ENCODE measurements at regions of chr19 and their contacts with region 1.

Region 1: GRCh38 chr19:17075035-17075863 is at the starts of genes HAUS8 and MYO9B:
- DNase-seq: peak; percentile 99
- ATAC-seq: peak; percentile 94 to 98 (median 98)
- H3K4me3 ChIP-seq: peak within 1 kb of the TSS; percentile 61 to 88 (median 75)
- H3K27ac ChIP-seq: peak within 1 kb of the TSS; percentile 67 to 91 (median 81)
- H3K4me1 ChIP-seq: peaks cover 4 to 72% (median 45%) of the 10 kb centered on the region in 9 donors
- H3K27me3 ChIP-seq: no peaks in the 10 kb centered on the region
- CTCF ChIP-seq: no peak
- total RNA-seq, gene HAUS8: 2.0 to 9.1 (median 4.7) TPM
- total RNA-seq, gene MYO9B: 19.9 to 55.0 (median 27.5) TPM

Region 2: GRCh38 chr19:17041976-17042375 is 33.3 kb before region 1 on chr19:
- intact Hi-C with region 1: no loop called
- DNase-seq: peak; percentile 54 to 70
- ATAC-seq: peak; percentile 73 to 95 (median 91)
- H3K4me3 ChIP-seq: no peak overlapping the region
- H3K27ac ChIP-seq: peak overlapping the region in 8 of 10 donors; percentile 34 to 75 (median 58)
- H3K4me1 ChIP-seq: peaks cover 0 to 16% (median 0%) of the 10 kb centered on the region in 9 donors
- H3K27me3 ChIP-seq: peaks cover 0 to 21% (median 7%) of the 10 kb centered on the region in 7 donors
- CTCF ChIP-seq: no peak

Region 3: DNA sequence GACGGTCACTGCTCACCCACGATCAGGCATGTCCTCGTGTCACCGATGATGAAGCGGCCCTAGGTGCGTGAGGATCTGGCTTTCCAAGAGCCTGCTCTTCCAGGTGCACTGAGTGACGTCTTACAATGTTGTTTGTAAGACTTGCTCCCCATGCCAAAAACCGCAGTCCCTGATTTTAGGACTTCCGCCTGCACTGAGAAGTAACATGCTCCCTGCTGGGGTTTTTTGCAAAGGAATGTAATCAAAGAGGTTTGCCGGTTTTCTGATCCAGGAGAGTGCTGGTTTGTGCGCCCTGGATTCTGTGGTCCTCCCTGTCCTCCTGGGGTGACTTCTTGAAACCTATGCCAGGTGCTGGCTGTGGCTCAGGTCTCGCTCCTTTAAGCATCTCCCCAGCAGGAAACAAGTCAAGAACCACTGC is 39.2 kb after region 1 on chr19:
- intact Hi-C with region 1: no loop called
- DNase-seq: no peak
- ATAC-seq: no peak
- H3K4me3 ChIP-seq: no peak overlapping the region
- H3K27ac ChIP-seq: peak overlapping the region in 1 of 10 donors; percentile 83
- H3K4me1 ChIP-seq: peaks cover 0 to 74% (median 14%) of the 10 kb centered on the region in 9 donors
- H3K27me3 ChIP-seq: no peaks in the 10 kb centered on the region
- CTCF ChIP-seq: no peak

Region 4: DNA sequence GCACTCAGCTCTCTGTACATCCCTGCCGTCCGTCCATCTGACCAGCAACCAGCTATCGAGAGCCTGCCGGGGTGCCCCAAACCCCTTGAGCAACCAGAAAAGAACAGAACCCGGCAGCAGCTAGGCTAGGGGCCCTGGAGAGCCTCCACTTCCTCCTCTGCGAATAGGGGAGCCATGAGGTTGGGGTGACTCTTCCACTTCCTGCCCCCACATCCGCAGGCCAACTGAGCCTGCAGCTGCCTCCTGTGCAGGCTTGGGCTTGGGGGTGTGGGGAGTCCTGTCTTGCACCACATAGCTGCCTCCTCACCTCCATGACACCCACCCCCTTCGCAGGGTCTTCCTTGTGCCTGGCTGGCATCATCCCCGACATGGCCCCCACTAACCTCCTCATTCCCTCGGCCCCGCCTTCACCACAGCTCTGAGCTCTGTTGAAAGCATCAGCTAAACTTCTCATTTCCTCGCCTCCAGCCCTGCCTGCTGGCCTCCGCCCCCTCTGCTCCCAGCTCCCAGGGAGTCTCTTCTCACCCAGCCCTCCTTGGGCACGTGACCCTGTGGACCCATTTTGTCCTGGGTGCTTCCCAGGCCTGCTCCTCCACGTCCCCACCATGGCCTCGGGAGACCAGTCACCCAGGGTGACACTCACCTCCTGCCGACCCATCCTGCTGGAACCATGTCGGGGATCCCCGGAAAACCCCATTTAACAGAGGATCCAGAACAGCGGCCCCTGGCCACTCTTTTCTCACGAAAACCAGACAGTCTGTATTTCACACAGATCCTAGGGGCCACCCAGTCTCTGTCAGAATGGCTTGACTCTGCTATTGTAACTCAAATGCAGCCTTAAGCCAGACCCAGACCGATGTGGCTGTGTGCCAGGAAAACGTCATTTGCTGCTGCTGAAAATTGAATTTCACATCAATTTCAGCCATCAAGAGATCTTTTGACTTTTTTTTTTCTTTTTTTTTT is 50.7 kb after region 1 on chr19:
- intact Hi-C with region 1: loop called in 2 of 10 experiments (anchors 5 to 10 kb)
- DNase-seq: peak; percentile 61 to 64
- ATAC-seq: peak; percentile 61 to 88 (median 83)
- H3K4me3 ChIP-seq: peak overlapping the region in 5 of 10 donors; percentile 1 to 31 (median 8)
- H3K27ac ChIP-seq: peak overlapping the region; percentile 22 to 92 (median 66)
- H3K4me1 ChIP-seq: peaks cover 4 to 49% (median 15%) of the 10 kb centered on the region in 9 donors
- H3K27me3 ChIP-seq: no peaks in the 10 kb centered on the region
- CTCF ChIP-seq: no peak

Region 5: DNA sequence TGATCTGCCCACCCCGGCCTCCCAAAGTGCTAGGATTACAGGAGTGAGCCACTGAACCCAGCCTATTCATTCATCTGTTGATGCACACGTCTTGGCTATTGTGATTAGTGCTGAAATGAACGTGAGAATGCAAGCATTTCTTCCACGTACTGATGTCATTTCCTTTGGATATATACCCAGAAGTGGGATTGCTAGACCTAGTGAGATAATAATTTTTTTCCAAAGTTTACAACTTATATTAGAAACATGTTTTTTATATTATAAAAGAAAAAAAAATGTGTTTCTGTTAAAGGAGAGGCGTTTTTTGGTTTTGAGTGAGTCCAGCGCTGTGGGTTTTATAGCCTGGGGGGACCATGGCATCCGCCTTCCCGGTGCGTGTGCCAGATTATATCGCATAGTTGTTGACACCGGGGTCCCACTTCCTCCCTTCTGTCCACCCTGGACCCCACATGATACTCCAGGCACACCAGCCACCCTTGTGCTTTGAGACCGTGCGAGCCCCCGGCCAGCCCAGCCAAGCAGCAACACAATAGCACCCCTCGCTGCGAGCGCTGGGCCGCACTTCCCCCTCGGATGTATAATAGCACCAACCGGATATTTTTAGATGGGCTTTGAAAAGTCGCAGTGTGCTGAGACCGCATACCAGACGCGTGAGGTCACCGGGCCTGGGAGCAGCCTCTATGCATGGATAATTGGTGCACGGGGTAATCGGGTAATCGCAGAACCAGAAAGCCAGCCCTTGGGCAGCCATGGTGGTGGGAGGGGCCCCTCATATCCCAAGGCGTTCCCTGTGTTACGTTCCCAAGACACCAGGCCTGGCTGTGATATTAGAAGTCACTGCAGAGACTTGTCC is 60.0 kb after region 1 on chr19:
- intact Hi-C with region 1: loop called in 7 of 10 experiments (anchors 1 to 10 kb)
- DNase-seq: peak; percentile 92 to 97
- ATAC-seq: peak; percentile 92 to 96 (median 94)
- H3K4me3 ChIP-seq: peak overlapping the region in 8 of 10 donors; percentile 1 to 49 (median 28)
- H3K27ac ChIP-seq: peak overlapping the region; percentile 85 to 99 (median 90)
- H3K4me1 ChIP-seq: peaks cover 15 to 53% (median 43%) of the 10 kb centered on the region in 9 donors
- H3K27me3 ChIP-seq: no peaks in the 10 kb centered on the region
- CTCF ChIP-seq: peak; percentile 10 to 76 (median 42)

Region 6: DNA sequence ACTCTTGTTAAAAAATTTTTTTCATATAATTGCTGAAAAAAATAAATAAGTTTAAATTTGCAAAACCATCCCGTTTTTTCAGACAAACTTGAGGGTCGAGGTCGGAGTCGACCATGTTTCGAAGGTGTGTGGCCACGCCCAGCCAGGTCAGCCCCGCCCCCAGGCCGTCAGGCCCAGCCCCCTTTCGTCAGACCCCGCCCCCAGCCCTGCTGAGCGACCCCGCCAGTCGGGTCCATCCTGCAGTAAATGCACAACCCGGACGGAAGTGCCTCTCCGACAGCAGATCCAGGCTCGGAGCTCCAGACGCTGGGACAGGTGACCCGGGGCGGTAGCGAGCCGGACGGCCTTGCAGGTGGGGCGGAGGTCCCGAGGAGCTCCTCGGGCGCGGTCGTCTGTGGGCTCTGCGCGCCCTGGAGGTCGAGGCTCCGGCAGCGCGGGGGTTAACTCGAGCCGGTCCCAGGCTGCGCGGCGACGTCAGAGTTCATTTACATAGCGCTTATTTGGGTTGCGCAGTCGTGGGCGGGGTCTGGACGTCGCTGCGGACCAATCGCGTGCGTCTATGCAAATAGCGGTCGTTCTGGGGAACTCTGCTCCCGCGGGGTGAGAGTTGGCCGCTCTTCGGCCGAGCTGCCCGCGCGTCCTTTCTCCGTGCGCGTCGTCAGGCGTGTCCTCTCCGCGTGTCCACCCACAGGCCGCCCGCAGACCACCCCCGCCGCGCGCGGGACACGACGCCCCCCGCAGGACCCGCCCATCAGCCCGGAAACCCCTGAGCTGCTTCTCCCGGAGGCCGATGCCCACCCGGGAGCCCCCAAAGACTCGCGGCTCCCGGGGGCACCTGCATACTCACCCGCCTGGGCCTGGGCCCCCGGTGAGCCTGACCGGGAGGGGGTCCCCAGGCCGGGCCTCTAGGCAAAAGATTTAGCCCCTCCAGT is 151.0 kb after region 1 on chr19 and contains the start of gene OCEL1:
- intact Hi-C with region 1: loop called in 3 of 10 experiments (anchors 5 to 10 kb)
- DNase-seq: peak; percentile 98 to 99
- ATAC-seq: peak; percentile 97 to 98 (median 98)
- H3K4me3 ChIP-seq: peak within 1 kb of the TSS; percentile 22 to 88 (median 72)
- H3K27ac ChIP-seq: peak within 1 kb of the TSS; percentile 27 to 94 (median 88)
- H3K4me1 ChIP-seq: peaks cover 0 to 25% (median 15%) of the 10 kb centered on the region in 9 donors
- H3K27me3 ChIP-seq: no peaks in the 10 kb centered on the region
- CTCF ChIP-seq: no peak
- total RNA-seq, gene OCEL1: 7.2 to 38.6 (median 15.0) TPM

Region 7: DNA sequence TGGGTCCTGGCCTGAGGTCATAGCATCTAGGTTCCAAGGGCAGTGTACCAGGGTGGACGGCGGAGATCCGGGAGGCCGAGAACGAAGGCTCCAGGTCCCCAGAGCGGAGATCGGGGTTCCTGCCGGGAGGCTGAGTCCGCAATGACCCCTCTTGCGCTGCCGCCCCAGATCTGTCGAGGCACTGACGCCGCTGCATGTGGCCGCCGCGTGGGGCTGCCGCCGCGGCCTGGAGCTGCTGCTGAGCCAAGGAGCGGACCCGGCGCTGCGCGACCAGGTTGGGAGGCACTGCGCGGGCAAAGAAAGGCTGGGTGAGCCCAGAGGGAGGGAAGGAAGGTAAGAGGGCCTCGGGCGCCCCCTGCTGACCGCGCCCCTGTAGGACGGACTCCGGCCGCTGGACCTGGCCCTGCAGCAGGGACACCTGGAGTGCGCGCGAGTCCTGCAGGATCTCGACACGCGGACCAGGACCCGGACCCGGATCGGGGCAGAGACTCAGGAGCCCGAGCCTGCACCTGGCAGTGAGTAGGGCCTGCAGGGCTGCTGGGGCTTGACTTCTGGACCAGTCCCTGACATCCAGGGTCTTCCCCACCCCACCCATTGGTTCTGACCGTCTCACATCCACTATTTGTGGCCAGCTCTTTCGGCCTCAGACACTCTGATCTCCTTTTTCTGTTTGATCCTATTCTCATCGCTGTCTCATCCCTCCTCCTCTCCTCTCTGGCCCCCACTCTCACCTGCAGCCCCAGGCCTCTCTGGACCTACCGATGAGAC is 207.4 kb after region 1 on chr19:
- intact Hi-C with region 1: loop called in 1 of 10 experiments (anchors 5 kb)
- DNase-seq: peak; percentile 78 to 86
- ATAC-seq: peak; percentile 89 to 97 (median 94)
- H3K4me3 ChIP-seq: peak overlapping the region; percentile 6 to 56 (median 42)
- H3K27ac ChIP-seq: no peak overlapping the region
- H3K4me1 ChIP-seq: peaks cover 13 to 19% (median 16%) of the 10 kb centered on the region in 9 donors
- H3K27me3 ChIP-seq: peaks cover 11 to 21% (median 16%) of the 10 kb centered on the region in 7 donors
- CTCF ChIP-seq: peak; percentile 89 to 98 (median 95)

Region 8: DNA sequence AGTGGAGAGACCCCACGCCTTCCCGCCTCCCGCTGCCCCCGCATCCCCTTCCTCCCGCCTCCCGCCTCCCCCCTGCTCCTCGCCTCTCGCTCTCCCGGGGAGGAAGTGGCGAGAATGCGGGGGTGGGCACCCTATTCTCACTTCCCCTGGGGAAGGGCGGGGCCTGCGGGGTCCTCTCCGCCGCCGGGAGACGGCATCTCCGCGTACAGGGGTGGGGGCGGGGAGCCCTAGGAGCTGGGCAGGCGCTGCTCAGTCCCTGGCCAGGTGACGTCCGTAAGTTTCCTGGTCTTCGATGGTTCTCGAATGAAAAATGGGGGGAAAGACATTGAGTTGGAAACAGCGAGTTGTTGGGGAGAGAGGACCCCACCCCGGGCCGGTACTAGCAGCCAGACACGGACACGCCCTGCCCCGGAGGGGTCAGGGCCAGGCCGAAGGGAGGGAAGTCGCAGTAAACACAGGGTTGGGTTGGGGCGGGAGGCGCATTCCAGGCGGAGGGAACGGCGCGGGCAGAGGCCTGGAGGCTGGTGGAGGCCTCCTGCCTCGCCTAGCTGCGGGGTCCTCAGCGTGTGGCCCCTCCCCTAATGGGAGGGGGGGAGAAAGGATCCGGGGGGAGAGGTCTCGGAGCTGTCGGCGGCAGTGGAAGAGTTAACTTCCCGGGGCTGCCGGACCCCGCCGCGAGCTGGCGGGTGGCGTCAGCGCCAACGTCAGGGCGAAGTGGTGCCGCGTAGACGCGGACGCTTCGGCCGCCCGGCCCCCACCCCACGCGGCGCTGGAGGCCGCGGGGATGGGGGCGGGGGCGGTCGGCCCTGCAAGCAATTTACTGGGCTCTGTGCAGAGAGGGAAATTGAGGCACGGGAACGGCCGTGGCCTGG is 1216.6 kb after region 1 on chr19:
- intact Hi-C with region 1: loop called in 1 of 10 experiments (anchors 10 kb)
- DNase-seq: peak; percentile 87 to 93
- ATAC-seq: peak; percentile 80 to 86 (median 84)
- H3K4me3 ChIP-seq: peak overlapping the region; percentile 62 to 89 (median 76)
- H3K27ac ChIP-seq: peak overlapping the region; percentile 94 to 100 (median 99)
- H3K4me1 ChIP-seq: peaks cover 3 to 48% (median 26%) of the 10 kb centered on the region in 9 donors
- H3K27me3 ChIP-seq: no peaks in the 10 kb centered on the region
- CTCF ChIP-seq: no peak